CD4-positive, alpha-beta T cell (primary cell): ENCODE measurements at regions of chr1 and their contacts with region 1.

Region 1: DNA sequence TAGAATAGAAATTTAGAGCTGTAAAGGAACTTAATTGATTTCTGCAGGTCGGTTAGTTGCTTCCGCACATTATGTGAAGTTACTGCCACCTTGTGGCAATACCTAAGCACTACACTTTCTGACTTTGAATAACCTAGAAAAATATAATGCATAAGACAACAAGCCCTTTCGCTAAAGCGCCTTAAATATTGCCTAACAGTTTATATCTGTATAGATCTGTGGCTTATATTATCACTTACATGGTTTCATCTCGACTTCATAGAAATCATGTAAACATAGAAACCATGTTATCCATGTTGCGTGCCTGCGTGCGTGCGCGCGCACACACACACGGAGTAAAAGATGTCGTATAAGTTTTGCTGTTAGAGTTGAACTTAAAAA is 10.9 kb upstream of the IFI16 start:
- DNase-seq: peak in 9 of 14 experiments; percentile 21 to 82 (median 40)
- ATAC-seq: peak; percentile 82
- H3K4me3 ChIP-seq: no peak overlapping the region
- H3K4me3 Mint-ChIP-seq: peak overlapping the region; percentile 57
- H3K27ac ChIP-seq: no peak overlapping the region
- H3K27ac Mint-ChIP-seq: peak overlapping the region; percentile 4
- H3K4me1 ChIP-seq: peaks cover 7% of the 10 kb centered on the region
- H3K4me1 Mint-ChIP-seq: peaks cover 32% of the 10 kb centered on the region
- H3K27me3 ChIP-seq: no peaks in the 10 kb centered on the region
- H3K27me3 Mint-ChIP-seq: no peaks in the 10 kb centered on the region
- CTCF ChIP-seq: peak; percentile 93

Region 2: GRCh38 chr1:157992031-157992832 is 1006.5 kb before region 1 on chr1:
- CTCF ChIA-PET with region 1: no interaction called
- POLR2A ChIA-PET with region 1: no interaction called
- intact Hi-C with region 1: loop called (anchors 2 to 10 kb)
- DNase-seq: peak in 12 of 14 experiments; percentile 5 to 54 (median 16)
- ATAC-seq: peak; percentile 48
- H3K4me3 ChIP-seq: no peak overlapping the region
- H3K4me3 Mint-ChIP-seq: no peak overlapping the region
- H3K27ac ChIP-seq: no peak overlapping the region
- H3K27ac Mint-ChIP-seq: no peak overlapping the region
- H3K4me1 ChIP-seq: peaks cover 9% of the 10 kb centered on the region
- H3K4me1 Mint-ChIP-seq: no peaks in the 10 kb centered on the region
- H3K27me3 ChIP-seq: peaks cover 21 to 41% of the 10 kb centered on the region in 2 experiments
- H3K27me3 Mint-ChIP-seq: peaks cover 62% of the 10 kb centered on the region
- CTCF ChIP-seq: peak; percentile 65

Region 3: GRCh38 chr1:158248118-158248517 is 750.7 kb before region 1 on chr1:
- CTCF ChIA-PET with region 1: no interaction called
- POLR2A ChIA-PET with region 1: no interaction called
- intact Hi-C with region 1: loop called (anchors 1 to 2 kb)
- DNase-seq: peak in 8 of 14 experiments; percentile 4 to 83 (median 20)
- ATAC-seq: peak; percentile 66
- H3K4me3 ChIP-seq: no peak overlapping the region
- H3K4me3 Mint-ChIP-seq: peak overlapping the region; percentile 22
- H3K27ac ChIP-seq: no peak overlapping the region
- H3K27ac Mint-ChIP-seq: no peak overlapping the region
- H3K4me1 ChIP-seq: peaks cover 23% of the 10 kb centered on the region
- H3K4me1 Mint-ChIP-seq: peaks cover 24% of the 10 kb centered on the region
- H3K27me3 ChIP-seq: peaks cover 6 to 14% of the 10 kb centered on the region in 2 experiments
- H3K27me3 Mint-ChIP-seq: peaks cover 59% of the 10 kb centered on the region
- CTCF ChIP-seq: no peak

Region 4: GRCh38 chr1:158793604-158794003 is 205.2 kb before region 1 on chr1:
- CTCF ChIA-PET with region 1: no interaction called
- POLR2A ChIA-PET with region 1: no interaction called
- intact Hi-C with region 1: loop called (anchors 2 kb)
- DNase-seq: peak in 10 of 14 experiments; percentile 6 to 57 (median 22)
- ATAC-seq: no peak
- H3K4me3 ChIP-seq: no peak overlapping the region
- H3K4me3 Mint-ChIP-seq: no peak overlapping the region
- H3K27ac ChIP-seq: no peak overlapping the region
- H3K27ac Mint-ChIP-seq: no peak overlapping the region
- H3K4me1 ChIP-seq: no peaks in the 10 kb centered on the region
- H3K4me1 Mint-ChIP-seq: no peaks in the 10 kb centered on the region
- H3K27me3 ChIP-seq: no peaks in the 10 kb centered on the region
- H3K27me3 Mint-ChIP-seq: peaks cover 6% of the 10 kb centered on the region
- CTCF ChIP-seq: peak; percentile 25

Region 5: DNA sequence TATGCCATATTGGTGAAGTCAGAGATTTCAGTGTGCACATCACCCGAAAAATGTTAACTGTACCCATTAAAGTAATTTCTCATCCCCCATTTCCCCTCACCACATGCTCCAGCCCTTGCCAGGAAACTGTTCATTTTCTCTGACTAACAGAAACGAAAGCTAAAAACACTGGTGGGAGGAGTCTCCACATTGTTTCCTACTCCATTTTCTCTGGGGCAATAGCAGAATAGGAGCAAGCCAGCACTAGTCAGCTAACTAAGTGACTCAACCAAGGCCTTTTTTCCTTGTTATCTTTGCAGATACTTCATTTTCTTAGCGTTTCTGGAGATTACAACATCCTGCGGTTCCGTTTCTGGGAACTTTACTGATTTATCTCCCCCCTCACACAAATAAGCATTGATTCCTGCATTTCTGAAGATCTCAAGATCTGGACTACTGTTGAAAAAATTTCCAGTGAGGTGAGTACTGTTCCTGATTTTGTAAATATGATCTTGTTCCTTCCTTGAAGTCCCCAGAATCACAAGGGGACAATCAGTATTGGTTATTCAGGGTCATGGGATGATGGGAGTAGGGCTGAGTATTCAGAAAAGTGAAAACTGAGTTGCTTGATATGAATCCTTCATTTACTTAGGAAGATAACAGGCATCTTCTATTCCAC is 11.1 kb after region 1 on chr1 and contains the start of gene IFI16:
- CTCF ChIA-PET with region 1: interaction called, 6 read pairs
- POLR2A ChIA-PET with region 1: interaction called, 11 read pairs
- intact Hi-C with region 1: no loop called
- DNase-seq: peak in 11 of 14 experiments; percentile 22 to 92 (median 55)
- ATAC-seq: peak; percentile 81
- H3K4me3 ChIP-seq: peak within 1 kb of the TSS; percentile 69
- H3K4me3 Mint-ChIP-seq: peak within 1 kb of the TSS; percentile 98
- H3K27ac ChIP-seq: peak within 1 kb of the TSS; percentile 72 to 92
- H3K27ac Mint-ChIP-seq: peak within 1 kb of the TSS; percentile 96
- H3K4me1 ChIP-seq: peaks cover 28% of the 10 kb centered on the region
- H3K4me1 Mint-ChIP-seq: peaks cover 66% of the 10 kb centered on the region
- H3K27me3 ChIP-seq: no peaks in the 10 kb centered on the region
- H3K27me3 Mint-ChIP-seq: no peaks in the 10 kb centered on the region
- CTCF ChIP-seq: no peak
- total RNA-seq, gene IFI16: 36.9 to 37.6 TPM

Region 6: GRCh38 chr1:159056069-159056698 is 57.4 kb after region 1 on chr1:
- CTCF ChIA-PET with region 1: no interaction called
- POLR2A ChIA-PET with region 1: no interaction called
- intact Hi-C with region 1: no loop called
- DNase-seq: peak in 1 of 14 experiments; percentile 12
- ATAC-seq: no peak
- H3K4me3 ChIP-seq: no peak overlapping the region
- H3K4me3 Mint-ChIP-seq: no peak overlapping the region
- H3K27ac ChIP-seq: no peak overlapping the region
- H3K27ac Mint-ChIP-seq: peak overlapping the region; percentile 19
- H3K4me1 ChIP-seq: peaks cover 3% of the 10 kb centered on the region
- H3K4me1 Mint-ChIP-seq: peaks cover 35% of the 10 kb centered on the region
- H3K27me3 ChIP-seq: no peaks in the 10 kb centered on the region
- H3K27me3 Mint-ChIP-seq: no peaks in the 10 kb centered on the region
- CTCF ChIP-seq: no peak

Region 7: GRCh38 chr1:159132271-159132881 is 133.6 kb after region 1 on chr1:
- CTCF ChIA-PET with region 1: no interaction called
- POLR2A ChIA-PET with region 1: no interaction called
- intact Hi-C with region 1: no loop called
- DNase-seq: peak; percentile 38 to 72 (median 54)
- ATAC-seq: no peak
- H3K4me3 ChIP-seq: no peak overlapping the region
- H3K4me3 Mint-ChIP-seq: no peak overlapping the region
- H3K27ac ChIP-seq: no peak overlapping the region
- H3K27ac Mint-ChIP-seq: no peak overlapping the region
- H3K4me1 ChIP-seq: no peaks in the 10 kb centered on the region
- H3K4me1 Mint-ChIP-seq: no peaks in the 10 kb centered on the region
- H3K27me3 ChIP-seq: peaks cover 4 to 14% of the 10 kb centered on the region in 2 experiments
- H3K27me3 Mint-ChIP-seq: peaks cover 13% of the 10 kb centered on the region
- CTCF ChIP-seq: peak; percentile 86